ENCODE measurements at regions of chr2 and their contacts with region 1.

Region 1: DNA sequence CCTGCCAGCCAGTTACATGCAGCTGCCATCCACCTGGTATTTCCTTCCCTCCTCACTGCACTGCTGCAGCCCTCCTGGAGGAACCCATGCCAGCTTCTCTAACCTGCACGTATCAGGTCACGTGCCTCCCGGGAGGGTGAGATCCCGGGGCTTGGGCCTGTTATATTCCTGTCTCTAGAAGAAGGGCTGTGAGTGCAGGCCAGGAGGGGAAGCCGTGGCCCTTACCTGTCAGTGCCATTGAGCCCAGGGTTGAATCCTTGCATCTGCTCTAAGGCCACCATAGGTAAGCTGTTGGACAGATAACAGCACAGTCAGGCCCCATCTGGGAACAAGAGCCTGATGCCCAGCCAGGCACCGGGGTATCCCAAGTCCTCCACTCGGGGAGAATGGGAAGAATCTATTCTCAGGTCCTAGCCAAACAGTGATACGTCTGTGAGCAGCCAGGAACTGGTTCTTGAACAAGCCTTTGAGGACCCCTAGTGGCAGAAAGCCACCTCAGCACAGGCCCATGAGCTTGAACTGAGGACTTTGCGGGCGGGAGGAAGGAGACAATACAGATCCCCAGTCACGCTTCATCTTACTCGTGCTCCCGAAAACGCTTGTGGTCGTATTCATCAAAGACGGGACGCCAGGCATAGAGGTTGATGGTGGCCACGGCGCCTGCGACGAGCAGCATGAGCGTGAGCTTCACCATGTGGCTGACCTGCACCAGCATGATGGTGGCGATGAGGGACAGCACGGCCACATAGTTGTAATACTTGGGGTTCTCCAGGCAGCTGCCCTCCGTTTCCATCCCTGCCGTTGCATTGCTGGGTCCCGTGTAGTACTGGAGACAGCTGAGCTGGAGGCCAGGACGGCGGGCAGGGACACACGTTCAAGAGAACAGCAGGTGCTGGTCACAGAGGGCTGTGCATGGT is 34.4 kb downstream of the CENPO start:
- DNase-seq: peak; percentile 78 to 91 (median 85)
- ATAC-seq: peak; percentile 90 to 94
- H3K4me3 ChIP-seq: no peak overlapping the region
- H3K27ac ChIP-seq: no peak overlapping the region
- H3K4me1 ChIP-seq: no peaks in the 10 kb centered on the region
- H3K27me3 ChIP-seq: no peaks in the 10 kb centered on the region

Region 2: DNA sequence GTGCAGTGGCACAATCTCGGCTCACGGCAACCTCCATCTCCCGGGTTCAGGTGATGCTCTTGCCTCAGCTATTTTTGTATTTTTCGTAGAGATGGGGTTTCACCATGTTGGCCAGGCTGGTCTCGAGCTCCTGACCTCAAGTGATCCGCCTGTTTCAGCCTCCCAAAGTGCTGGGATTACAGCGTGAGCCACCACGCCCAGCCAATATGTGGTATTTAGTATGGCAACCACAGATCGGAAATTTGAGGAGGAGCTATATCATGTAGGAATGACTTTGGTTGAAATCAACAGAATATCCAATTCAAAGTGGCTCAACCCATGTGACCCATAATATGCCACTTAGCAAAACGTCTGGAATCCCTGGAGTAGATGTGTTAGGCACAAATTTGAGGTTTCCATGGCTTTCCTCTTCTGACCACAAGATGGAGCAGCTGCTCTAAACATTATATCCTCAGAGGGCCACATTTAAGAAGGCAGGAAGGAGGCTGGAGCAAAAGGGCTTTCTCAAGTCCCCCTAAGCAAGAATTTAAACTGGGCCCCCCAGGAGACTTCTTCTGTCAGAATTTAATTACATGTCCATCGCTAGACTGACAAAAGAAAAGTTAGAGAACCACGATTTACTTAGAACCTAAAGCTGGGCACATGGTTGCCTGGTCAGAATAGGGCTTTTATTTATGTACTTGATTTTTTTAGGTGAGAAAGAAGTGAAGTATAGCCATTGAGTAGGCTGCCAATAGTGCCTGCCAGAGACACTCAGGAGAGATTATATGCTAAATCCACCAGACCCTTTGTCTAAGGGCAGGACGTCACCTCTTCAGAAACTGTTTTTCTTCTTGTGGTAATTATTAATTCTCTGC is 417.7 kb before region 1 on chr2:
- intact Hi-C with region 1: loop called (anchors 2 to 5 kb)
- DNase-seq: no peak
- ATAC-seq: peak; percentile 85 to 86
- H3K4me3 ChIP-seq: no peak overlapping the region
- H3K27ac ChIP-seq: no peak overlapping the region
- H3K4me1 ChIP-seq: no peaks in the 10 kb centered on the region
- H3K27me3 ChIP-seq: no peaks in the 10 kb centered on the region

Region 3: DNA sequence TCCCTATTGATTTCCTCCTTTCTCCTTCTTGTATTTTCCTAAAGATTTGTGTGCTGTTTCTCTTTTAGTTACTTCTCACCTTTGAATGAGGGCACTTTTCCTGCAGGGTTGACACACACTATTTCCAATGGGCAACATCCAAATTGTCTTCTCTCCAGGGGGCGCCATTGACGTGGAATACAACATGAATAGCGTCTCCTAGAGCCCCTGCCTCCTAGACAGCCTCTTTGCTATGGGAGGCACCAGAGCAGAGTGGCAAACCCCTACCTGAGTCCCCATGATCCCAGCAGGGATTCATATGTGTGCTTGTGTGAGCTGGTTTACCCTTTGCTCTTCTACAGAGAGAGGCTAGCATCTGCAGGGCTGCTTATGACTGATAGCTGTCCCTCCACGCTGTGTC is 405.9 kb before region 1 on chr2:
- intact Hi-C with region 1: loop called in 1 of 4 experiments (anchors 5 kb)
- DNase-seq: peak; percentile 60 to 85 (median 69)
- ATAC-seq: peak; percentile 54 to 76
- H3K4me3 ChIP-seq: no peak overlapping the region
- H3K27ac ChIP-seq: no peak overlapping the region
- H3K4me1 ChIP-seq: no peaks in the 10 kb centered on the region
- H3K27me3 ChIP-seq: no peaks in the 10 kb centered on the region

Region 4: GRCh38 chr2:24959761-24960160 is 132.2 kb after region 1 on chr2:
- intact Hi-C with region 1: no loop called
- DNase-seq: no peak
- ATAC-seq: no peak
- H3K4me3 ChIP-seq: no peak overlapping the region
- H3K27ac ChIP-seq: no peak overlapping the region
- H3K4me1 ChIP-seq: peaks cover 3% of the 10 kb centered on the region
- H3K27me3 ChIP-seq: no peaks in the 10 kb centered on the region